ENCODE measurements at regions of chr3 and their contacts with region 1.

Region 1: GRCh38 chr3:183991403-183991802 is 26.3 kb downstream of the ABCC5 start:
- DNase-seq: no peak

Region 2: DNA sequence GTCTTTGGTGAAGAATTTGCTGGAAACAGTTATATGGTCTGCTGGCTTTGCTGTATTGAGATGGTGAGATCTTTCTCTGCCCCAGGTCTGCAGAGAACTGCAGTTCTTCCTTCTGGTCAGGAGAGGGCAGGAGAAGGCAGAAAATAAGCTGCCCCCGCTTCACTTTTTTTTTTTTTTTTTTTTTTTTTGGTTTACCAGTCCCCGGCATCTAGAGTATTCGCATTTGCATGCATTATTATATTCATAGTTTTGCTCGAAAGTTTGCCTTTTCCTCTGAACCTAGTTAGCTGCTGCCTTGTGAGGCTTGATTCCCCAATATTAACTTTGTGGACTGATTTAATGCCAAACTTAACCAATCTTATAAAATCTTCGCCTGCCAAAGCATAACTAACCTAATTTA is 96.1 kb before region 1 on chr3:
- in situ Hi-C with region 1: loop called (anchors 10 kb)
- DNase-seq: peak; percentile 76

Region 3: DNA sequence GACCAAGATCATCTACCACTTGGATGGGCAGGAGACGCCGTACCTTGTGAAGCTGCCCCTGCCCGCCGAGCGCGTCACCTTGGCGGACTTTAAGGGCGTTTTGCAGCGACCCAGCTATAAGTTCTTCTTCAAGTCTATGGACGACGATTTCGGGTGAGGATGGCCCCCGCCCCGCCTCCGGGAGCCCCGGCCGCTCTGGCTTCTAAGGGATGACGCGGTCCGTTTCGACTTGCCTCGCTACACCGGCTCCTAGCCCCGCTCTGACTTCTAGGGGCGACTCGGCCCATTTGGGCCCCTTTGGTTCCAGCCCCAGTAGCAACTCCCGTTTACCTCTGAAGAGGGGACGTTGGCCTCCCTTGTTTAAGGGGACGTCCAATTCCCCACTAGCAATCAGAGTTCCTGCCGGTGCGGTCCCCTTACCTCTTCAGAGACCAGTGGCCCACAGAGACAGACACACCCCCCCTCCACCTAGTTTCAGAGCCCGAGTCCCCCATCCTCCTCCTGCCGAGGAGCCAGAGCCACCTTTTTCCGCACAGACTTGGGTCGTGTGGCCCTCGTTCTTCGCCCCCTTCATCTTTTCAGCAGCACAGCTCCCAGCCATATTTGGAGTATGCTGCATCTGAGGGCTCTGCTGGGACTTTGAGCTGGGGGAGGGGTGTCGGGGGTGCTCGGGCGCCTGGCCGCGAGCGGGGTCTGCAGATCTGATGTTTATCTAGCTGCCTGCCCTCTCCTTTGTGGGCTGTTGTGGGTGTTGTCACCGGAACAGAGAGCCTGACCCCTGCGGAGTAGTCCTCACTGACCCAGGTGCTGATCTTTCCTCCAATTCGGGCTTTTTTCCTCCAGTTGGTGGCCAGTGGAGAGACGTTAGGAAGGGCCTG is 164.5 kb after region 1 on chr3:
- in situ Hi-C with region 1: no loop called
- DNase-seq: peak; percentile 14

Measured in SK-MEL-5 (cell line).